ENCODE measurements at regions of chr10 and their contacts with region 1.

Region 1: GRCh38 chr10:91536111-91536510 is 96.8 kb downstream of the PPP1R3C start:
- DNase-seq: no peak
- H3K4me3 ChIP-seq: no peak overlapping the region
- H3K27ac ChIP-seq: no peak overlapping the region
- H3K4me1 ChIP-seq: no peaks in the 10 kb centered on the region
- H3K27me3 ChIP-seq: no peaks in the 10 kb centered on the region
- CTCF ChIP-seq: no peak
- EP300 ChIP-seq: no peak
- POLR2A ChIP-seq: no peak

Region 2: GRCh38 chr10:90947030-90947940 is 588.8 kb before region 1 on chr10:
- in situ Hi-C with region 1: no loop called
- intact Hi-C with region 1: loop called (anchors 5 kb)
- DNase-seq: no peak
- H3K4me3 ChIP-seq: no peak overlapping the region
- H3K27ac ChIP-seq: no peak overlapping the region
- H3K4me1 ChIP-seq: no peaks in the 10 kb centered on the region
- H3K27me3 ChIP-seq: no peaks in the 10 kb centered on the region
- CTCF ChIP-seq: no peak
- EP300 ChIP-seq: no peak
- POLR2A ChIP-seq: no peak